ENCODE measurements at regions of chr3 and their contacts with region 1.

Region 1: GRCh38 chr3:59857589-59858346 is 807.9 kb upstream of the CFAP20DC start:
- DNase-seq: peak; percentile 78
- H3K4me3 ChIP-seq: no peak overlapping the region
- H3K27ac ChIP-seq: no peak overlapping the region
- H3K4me1 ChIP-seq: no peaks in the 10 kb centered on the region
- H3K27me3 ChIP-seq: no peaks in the 10 kb centered on the region
- CTCF ChIP-seq: peak; percentile 67 to 89 (median 85)
- POLR2A ChIP-seq: no peak

Region 2: DNA sequence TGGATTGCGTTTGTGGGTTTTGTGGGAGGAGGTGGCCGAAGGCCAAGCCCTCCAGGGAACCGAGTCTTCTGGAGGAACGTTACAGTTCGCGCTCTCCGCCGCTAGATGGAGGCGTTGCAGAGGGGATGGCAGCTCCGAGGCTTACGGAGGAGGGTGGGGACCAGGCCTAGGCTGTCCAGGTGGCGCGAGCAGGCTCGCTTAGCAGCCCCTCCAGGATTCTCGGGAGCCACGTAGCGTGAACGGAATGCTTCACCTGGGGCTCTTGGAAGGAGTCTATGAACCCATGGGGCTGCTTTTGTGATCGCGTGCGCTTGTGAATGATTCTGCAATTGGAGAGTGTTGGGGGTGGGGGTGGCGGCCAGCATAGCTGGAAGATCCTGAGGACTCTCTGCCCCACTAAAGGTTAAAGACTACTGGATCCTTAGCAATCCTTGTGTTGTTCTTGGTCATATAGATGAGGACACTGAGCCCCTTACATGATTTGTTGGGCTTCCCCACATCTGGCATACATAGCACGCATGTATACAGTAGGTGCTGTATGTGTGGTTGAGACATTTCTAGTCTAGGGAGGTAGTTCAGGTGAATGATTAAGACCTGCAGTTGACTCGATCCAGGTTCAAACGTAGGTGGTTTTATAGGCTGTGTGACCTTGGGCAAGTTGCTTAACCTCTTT is 1216.9 kb before region 1 on chr3:
- intact Hi-C with region 1: loop called (anchors 10 kb)
- DNase-seq: peak; percentile 72
- H3K4me3 ChIP-seq: no peak overlapping the region
- H3K27ac ChIP-seq: no peak overlapping the region
- H3K4me1 ChIP-seq: no peaks in the 10 kb centered on the region
- H3K27me3 ChIP-seq: no peaks in the 10 kb centered on the region
- CTCF ChIP-seq: peak; percentile 35 to 88 (median 80)
- POLR2A ChIP-seq: no peak

Region 3: DNA sequence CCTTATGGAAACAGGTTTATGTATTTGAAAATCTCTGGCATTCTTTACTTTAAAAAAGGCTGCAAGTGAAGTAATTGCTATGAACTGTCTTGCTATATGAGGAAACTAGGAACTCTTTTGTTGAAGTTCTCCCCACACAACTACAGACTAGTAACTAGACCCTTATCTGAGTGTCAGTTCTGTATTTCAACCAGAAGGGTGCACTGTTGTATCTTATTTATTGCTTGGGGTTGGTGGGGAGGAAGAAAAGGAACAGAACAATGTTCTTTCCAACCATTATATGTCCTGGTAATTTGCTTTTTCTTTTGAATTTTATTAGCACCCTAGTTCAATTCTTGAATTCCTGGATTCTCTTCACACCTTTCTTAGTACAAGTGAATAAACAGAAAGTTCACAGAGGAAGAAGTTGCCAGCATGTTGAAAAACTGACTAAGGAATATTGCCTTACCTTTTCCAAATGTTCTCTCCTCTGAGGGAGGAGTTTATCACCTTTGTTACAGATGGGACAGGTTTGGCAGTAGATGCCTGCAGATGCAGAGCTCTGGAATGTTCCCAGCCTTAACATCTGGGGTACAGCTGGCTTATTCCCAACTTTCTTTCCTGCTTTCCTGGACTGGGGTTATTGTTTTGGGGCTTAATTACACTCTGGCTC is 645.5 kb before region 1 on chr3:
- intact Hi-C with region 1: loop called (anchors 10 kb)
- DNase-seq: peak; percentile 15
- H3K4me3 ChIP-seq: no peak overlapping the region
- H3K27ac ChIP-seq: no peak overlapping the region
- H3K4me1 ChIP-seq: no peaks in the 10 kb centered on the region
- H3K27me3 ChIP-seq: no peaks in the 10 kb centered on the region
- CTCF ChIP-seq: peak in 3 of 4 experiments; percentile 65 to 70 (median 68)
- POLR2A ChIP-seq: no peak

Region 4: GRCh38 chr3:59313365-59313764 is 544.4 kb before region 1 on chr3:
- intact Hi-C with region 1: loop called (anchors 5 kb)
- DNase-seq: peak; percentile 4
- H3K4me3 ChIP-seq: no peak overlapping the region
- H3K27ac ChIP-seq: no peak overlapping the region
- H3K4me1 ChIP-seq: peaks cover 4% of the 10 kb centered on the region
- H3K27me3 ChIP-seq: no peaks in the 10 kb centered on the region
- CTCF ChIP-seq: peak in 2 of 4 experiments; percentile 17 to 28
- POLR2A ChIP-seq: no peak

Region 5: GRCh38 chr3:59575113-59576001 is 282.4 kb before region 1 on chr3:
- intact Hi-C with region 1: loop called (anchors 2 kb)
- DNase-seq: peak; percentile 89
- H3K4me3 ChIP-seq: no peak overlapping the region
- H3K27ac ChIP-seq: no peak overlapping the region
- H3K4me1 ChIP-seq: no peaks in the 10 kb centered on the region
- H3K27me3 ChIP-seq: no peaks in the 10 kb centered on the region
- CTCF ChIP-seq: peak; percentile 92 to 94 (median 93)
- POLR2A ChIP-seq: no peak

Region 6: GRCh38 chr3:59920822-59921221 is 63.1 kb after region 1 on chr3:
- intact Hi-C with region 1: no loop called
- DNase-seq: no peak
- H3K4me3 ChIP-seq: no peak overlapping the region
- H3K27ac ChIP-seq: no peak overlapping the region
- H3K4me1 ChIP-seq: no peaks in the 10 kb centered on the region
- H3K27me3 ChIP-seq: no peaks in the 10 kb centered on the region
- CTCF ChIP-seq: no peak
- POLR2A ChIP-seq: no peak

Region 7: DNA sequence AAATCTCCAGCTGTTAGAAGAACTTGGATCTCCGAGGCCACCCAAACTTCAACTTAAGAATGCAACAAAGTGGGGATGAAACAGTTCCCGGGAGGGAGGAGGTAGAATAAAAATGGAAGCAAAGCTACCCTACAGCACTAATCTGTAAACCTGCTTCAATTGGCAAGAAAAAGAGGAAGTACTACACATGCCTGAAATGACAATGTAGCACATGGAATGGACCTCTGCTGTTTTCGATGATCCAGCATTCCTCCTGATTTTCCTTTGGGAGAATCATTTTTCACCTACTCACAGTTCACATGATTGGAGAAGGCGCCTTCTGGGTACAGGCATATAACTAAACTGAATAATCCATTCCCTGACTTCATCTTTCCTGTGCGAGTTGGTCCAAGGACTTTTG is 312.0 kb after region 1 on chr3:
- intact Hi-C with region 1: no loop called
- DNase-seq: no peak
- H3K4me3 ChIP-seq: no peak overlapping the region
- H3K27ac ChIP-seq: no peak overlapping the region
- H3K4me1 ChIP-seq: no peaks in the 10 kb centered on the region
- H3K27me3 ChIP-seq: no peaks in the 10 kb centered on the region
- CTCF ChIP-seq: no peak
- POLR2A ChIP-seq: no peak

Region 8: GRCh38 chr3:60202052-60202726 is 344.4 kb after region 1 on chr3:
- intact Hi-C with region 1: no loop called
- DNase-seq: no peak
- H3K4me3 ChIP-seq: no peak overlapping the region
- H3K27ac ChIP-seq: no peak overlapping the region
- H3K4me1 ChIP-seq: no peaks in the 10 kb centered on the region
- H3K27me3 ChIP-seq: no peaks in the 10 kb centered on the region
- CTCF ChIP-seq: no peak
- POLR2A ChIP-seq: no peak

Measured in prostate gland (tissue), 2 donors.